Activated CD4-positive, alpha-beta T cell treated with anti-CD3 and anti-CD28 coated beads for 36 hours (primary cell): ENCODE measurements at regions of chr19 and their contacts with region 1.

Region 1: GRCh38 chr19:40690693-40691420 is 406 bp upstream of the NUMBL start:
- DNase-seq: peak; percentile 97
- ATAC-seq: peak; percentile 85
- H3K4me3 Mint-ChIP-seq: peak overlapping the region; percentile 80
- H3K27ac Mint-ChIP-seq: peak overlapping the region; percentile 87
- H3K4me1 Mint-ChIP-seq: peaks cover 5% of the 10 kb centered on the region
- H3K27me3 Mint-ChIP-seq: no peaks in the 10 kb centered on the region

Region 2: GRCh38 chr19:40465557-40466150 is 225.2 kb before region 1 on chr19 and contains the start of gene BLVRB:
- CTCF ChIA-PET with region 1: no interaction called
- POLR2A ChIA-PET with region 1: no interaction called
- intact Hi-C with region 1: loop called in 1 of 2 experiments (anchors 2 kb)
- DNase-seq: peak; percentile 100
- ATAC-seq: peak; percentile 84
- H3K4me3 Mint-ChIP-seq: peak within 1 kb of the TSS; percentile 77
- H3K27ac Mint-ChIP-seq: peak within 1 kb of the TSS; percentile 87
- H3K4me1 Mint-ChIP-seq: peaks cover 30% of the 10 kb centered on the region
- H3K27me3 Mint-ChIP-seq: peaks cover 11% of the 10 kb centered on the region
- total RNA-seq, gene BLVRB: 34.1 to 35.6 TPM

Region 3: GRCh38 chr19:40614622-40615411 is 76.0 kb before region 1 on chr19:
- CTCF ChIA-PET with region 1: no interaction called
- POLR2A ChIA-PET with region 1: no interaction called
- intact Hi-C with region 1: loop called in 1 of 2 experiments (anchors 1 kb)
- DNase-seq: peak; percentile 98
- ATAC-seq: peak; percentile 55
- H3K4me3 Mint-ChIP-seq: peak overlapping the region; percentile 99
- H3K27ac Mint-ChIP-seq: peak overlapping the region; percentile 100
- H3K4me1 Mint-ChIP-seq: peaks cover 58% of the 10 kb centered on the region
- H3K27me3 Mint-ChIP-seq: no peaks in the 10 kb centered on the region

Region 4: GRCh38 chr19:40777937-40778705 is 87.3 kb after region 1 on chr19 and contains the start of gene RAB4B:
- CTCF ChIA-PET with region 1: no interaction called
- POLR2A ChIA-PET with region 1: interaction called, 4 read pairs
- intact Hi-C with region 1: loop called in 1 of 2 experiments (anchors 1 kb)
- DNase-seq: peak; percentile 100
- ATAC-seq: peak; percentile 79
- H3K4me3 Mint-ChIP-seq: peak within 1 kb of the TSS; percentile 84
- H3K27ac Mint-ChIP-seq: peak within 1 kb of the TSS; percentile 94
- H3K4me1 Mint-ChIP-seq: peaks cover 38% of the 10 kb centered on the region
- H3K27me3 Mint-ChIP-seq: no peaks in the 10 kb centered on the region
- total RNA-seq, gene RAB4B: 26.4 to 33.7 TPM

Region 5: GRCh38 chr19:40806488-40807468 is 115.9 kb after region 1 on chr19:
- CTCF ChIA-PET with region 1: no interaction called
- POLR2A ChIA-PET with region 1: no interaction called
- intact Hi-C with region 1: loop called in 1 of 2 experiments (anchors 2 kb)
- DNase-seq: peak; percentile 90
- ATAC-seq: peak; percentile 51
- H3K4me3 Mint-ChIP-seq: peak overlapping the region; percentile 55
- H3K27ac Mint-ChIP-seq: peak overlapping the region; percentile 89
- H3K4me1 Mint-ChIP-seq: peaks cover 72% of the 10 kb centered on the region
- H3K27me3 Mint-ChIP-seq: no peaks in the 10 kb centered on the region

Region 6: GRCh38 chr19:41248895-41249294 is 558.0 kb after region 1 on chr19:
- CTCF ChIA-PET with region 1: no interaction called
- POLR2A ChIA-PET with region 1: no interaction called
- intact Hi-C with region 1: no loop called
- DNase-seq: no peak
- ATAC-seq: no peak
- H3K4me3 Mint-ChIP-seq: no peak overlapping the region
- H3K27ac Mint-ChIP-seq: no peak overlapping the region
- H3K4me1 Mint-ChIP-seq: no peaks in the 10 kb centered on the region
- H3K27me3 Mint-ChIP-seq: no peaks in the 10 kb centered on the region